ENCODE measurements at regions of chr9 and their contacts with region 1.

Region 1: GRCh38 chr9:137540536-137540935 is 9.7 kb downstream of the PNPLA7 start:
- DNase-seq: no peak
- H3K4me3 ChIP-seq: no peak overlapping the region
- H3K27ac ChIP-seq: no peak overlapping the region
- H3K4me1 ChIP-seq: no peaks in the 10 kb centered on the region
- H3K27me3 ChIP-seq: no peaks in the 10 kb centered on the region
- CTCF ChIP-seq: no peak
- POLR2A ChIP-seq: no peak

Region 2: DNA sequence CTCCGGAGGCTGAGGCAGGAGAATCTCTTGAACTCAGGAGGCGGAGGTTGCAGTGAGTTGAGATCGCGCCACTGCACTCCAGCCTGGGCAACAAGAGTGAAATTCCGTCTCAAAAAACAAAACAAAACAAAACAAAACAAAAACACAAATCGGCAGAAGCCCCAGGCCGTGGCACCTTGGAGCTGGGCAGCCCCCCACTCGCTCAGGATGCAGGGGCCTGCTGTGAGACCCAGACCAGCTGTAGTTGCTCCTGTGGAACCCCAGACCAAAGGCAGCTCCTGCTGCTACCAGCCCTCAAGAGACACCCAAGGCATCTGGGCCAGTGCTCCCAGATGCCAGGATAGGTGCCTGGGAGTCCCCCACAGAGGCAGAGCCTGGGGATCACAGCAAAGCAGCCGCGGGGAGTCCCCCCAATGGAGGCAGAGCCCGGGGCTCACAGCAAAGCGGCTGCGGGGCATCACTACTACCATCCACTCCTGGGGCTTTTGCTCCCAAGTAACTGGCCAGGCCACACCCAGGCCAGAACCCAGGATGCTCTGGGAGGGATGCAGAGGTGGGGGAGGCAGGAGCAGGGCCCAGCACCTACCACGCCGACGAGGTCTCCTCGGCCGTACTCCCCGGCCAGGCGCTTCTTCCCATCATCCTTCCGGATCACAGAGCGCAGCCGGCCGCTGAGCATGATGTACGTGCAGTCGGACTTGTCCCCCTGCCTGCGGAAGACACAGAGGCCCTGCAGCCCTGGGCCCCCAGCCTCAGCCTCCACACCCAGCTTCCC is 43.7 kb before region 1 on chr9:
- intact Hi-C with region 1: loop called (anchors 1 kb)
- DNase-seq: no peak
- H3K4me3 ChIP-seq: no peak overlapping the region
- H3K27ac ChIP-seq: no peak overlapping the region
- H3K4me1 ChIP-seq: no peaks in the 10 kb centered on the region
- H3K27me3 ChIP-seq: no peaks in the 10 kb centered on the region
- CTCF ChIP-seq: no peak
- POLR2A ChIP-seq: no peak

Region 3: GRCh38 chr9:137621131-137621757 is 80.7 kb after region 1 on chr9:
- intact Hi-C with region 1: no loop called
- DNase-seq: no peak
- H3K4me3 ChIP-seq: peak overlapping the region in 1 of 3 donors; percentile 2
- H3K27ac ChIP-seq: peak overlapping the region in 1 of 2 donors; percentile 1
- H3K4me1 ChIP-seq: peaks cover 8 to 24% of the 10 kb centered on the region in 2 donors
- H3K27me3 ChIP-seq: no peaks in the 10 kb centered on the region
- CTCF ChIP-seq: peak in 2 of 3 donors; percentile 16 to 23
- POLR2A ChIP-seq: no peak

Measured in breast epithelium (tissue), 4 donors.